ENCODE measurements at regions of chr9 and their contacts with region 1.

Region 1: GRCh38 chr9:94767331-94768072 is 41.0 kb downstream of the AOPEP start:
- DNase-seq: no peak
- H3K4me3 ChIP-seq: no peak overlapping the region
- H3K27ac ChIP-seq: no peak overlapping the region
- H3K4me1 ChIP-seq: no peaks in the 10 kb centered on the region
- H3K27me3 ChIP-seq: no peaks in the 10 kb centered on the region
- CTCF ChIP-seq: no peak
- POLR2A ChIP-seq: no peak

Region 2: GRCh38 chr9:94668418-94668932 is 99.0 kb before region 1 on chr9:
- intact Hi-C with region 1: no loop called
- DNase-seq: no peak
- H3K4me3 ChIP-seq: peak overlapping the region in 4 of 8 donors; percentile 43 to 71 (median 46)
- H3K27ac ChIP-seq: peak overlapping the region in 1 of 8 donors; percentile 54
- H3K4me1 ChIP-seq: peaks cover 0 to 16% (median 10%) of the 10 kb centered on the region in 6 donors
- H3K27me3 ChIP-seq: peaks cover 0 to 20% (median 0%) of the 10 kb centered on the region in 7 donors
- CTCF ChIP-seq: no peak
- POLR2A ChIP-seq: no peak

Region 3: DNA sequence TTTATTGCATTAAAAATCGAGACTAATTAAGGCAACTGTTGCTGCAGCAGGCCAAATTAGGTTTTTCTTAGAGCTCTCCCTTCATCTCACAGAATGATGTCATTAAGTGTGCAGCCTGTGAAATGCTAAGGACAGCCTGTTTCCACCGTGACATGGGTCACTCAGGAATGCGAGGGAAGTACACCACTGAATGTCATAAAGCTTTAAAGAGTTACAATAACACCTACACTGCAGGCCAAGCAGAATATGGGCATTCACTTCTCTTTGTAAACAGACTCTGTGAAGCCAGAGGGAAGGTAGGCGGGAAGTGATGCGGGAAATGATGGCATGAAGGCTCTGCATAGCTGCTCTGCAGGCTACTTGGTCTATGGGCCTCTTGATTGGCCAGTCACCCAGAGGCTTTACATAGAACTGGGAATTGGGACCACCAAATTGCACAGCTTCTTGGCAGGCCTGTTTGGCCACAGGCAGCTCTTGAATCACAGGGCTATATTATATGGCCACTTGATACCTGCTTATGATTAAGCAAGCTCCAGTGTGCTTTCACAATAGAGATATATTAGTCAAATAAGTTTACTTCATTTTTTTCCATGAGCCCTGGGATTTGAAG is 69.4 kb before region 1 on chr9:
- intact Hi-C with region 1: loop called (anchors 10 kb)
- DNase-seq: no peak
- H3K4me3 ChIP-seq: no peak overlapping the region
- H3K27ac ChIP-seq: no peak overlapping the region
- H3K4me1 ChIP-seq: no peaks in the 10 kb centered on the region
- H3K27me3 ChIP-seq: no peaks in the 10 kb centered on the region
- CTCF ChIP-seq: no peak
- POLR2A ChIP-seq: no peak

Region 4: DNA sequence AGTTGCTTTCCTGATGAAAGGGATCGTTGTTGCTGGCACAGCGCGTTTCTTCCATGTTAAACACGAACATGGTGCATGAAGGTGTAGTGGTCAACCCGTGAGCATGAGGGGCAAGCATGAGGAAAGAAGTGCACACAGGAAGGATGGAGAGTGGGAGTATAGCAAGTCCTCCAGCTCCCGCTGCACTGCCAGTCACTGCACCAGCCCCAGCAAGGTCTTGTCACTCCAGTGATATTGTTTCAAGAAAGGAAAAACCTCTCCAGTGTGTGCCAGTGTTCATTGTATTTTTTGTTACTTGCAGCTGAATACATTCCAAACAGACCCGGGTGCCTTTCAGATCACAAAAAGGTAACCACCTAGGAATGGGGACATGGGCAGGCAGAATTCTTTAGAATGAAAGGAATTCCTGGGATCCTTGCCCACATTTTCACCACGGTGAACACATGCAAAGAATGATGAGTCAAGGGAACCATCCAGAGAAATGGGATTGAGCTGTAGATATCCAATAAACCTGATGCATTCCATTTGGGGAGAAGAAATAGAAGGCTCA is 145.3 kb after region 1 on chr9:
- intact Hi-C with region 1: no loop called
- DNase-seq: no peak
- H3K4me3 ChIP-seq: no peak overlapping the region
- H3K27ac ChIP-seq: no peak overlapping the region
- H3K4me1 ChIP-seq: no peaks in the 10 kb centered on the region
- H3K27me3 ChIP-seq: no peaks in the 10 kb centered on the region
- CTCF ChIP-seq: no peak
- POLR2A ChIP-seq: no peak

Region 5: DNA sequence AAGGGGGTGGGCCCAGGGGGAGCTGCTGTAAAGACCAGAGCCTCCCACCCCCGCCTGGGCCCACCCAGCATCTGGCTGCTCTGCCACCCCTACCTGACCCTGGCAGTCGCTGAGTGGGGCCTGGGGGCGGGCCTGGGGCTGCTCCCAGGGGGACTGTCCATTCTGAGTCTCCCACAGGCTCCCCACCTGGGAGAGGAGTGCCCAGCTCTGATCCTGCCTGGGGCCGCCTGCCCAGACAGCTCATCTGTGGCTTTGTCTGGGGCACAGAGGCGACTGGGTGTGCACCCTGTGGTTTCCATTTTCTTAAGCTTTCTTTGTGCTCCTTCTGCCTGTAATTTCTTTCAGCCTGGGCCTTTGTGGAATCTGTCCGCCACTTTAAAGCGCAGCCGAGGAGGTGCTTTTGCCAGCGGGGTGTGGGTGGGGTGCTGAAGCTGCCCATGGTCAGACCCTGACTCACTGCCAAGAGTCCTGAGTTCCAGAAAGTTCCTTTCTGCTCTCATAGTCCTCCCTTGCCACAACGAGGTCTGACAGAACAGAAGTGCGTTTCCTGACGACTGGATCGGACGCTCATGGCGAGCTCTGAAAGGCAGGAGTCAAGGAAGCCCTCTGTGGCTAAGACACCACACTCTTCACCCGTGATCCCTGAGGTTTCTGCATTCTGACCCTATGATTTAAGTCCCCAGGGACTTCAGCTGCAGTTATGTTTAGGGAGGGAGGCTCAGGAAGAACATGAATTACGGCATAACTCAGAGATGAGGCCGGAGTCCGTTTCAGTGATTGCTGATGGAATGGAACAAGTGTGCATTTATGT is 325.0 kb after region 1 on chr9:
- intact Hi-C with region 1: no loop called
- DNase-seq: no peak
- H3K4me3 ChIP-seq: no peak overlapping the region
- H3K27ac ChIP-seq: peak overlapping the region; percentile 27 to 85 (median 70)
- H3K4me1 ChIP-seq: peaks cover 18 to 83% (median 48%) of the 10 kb centered on the region in 6 donors
- H3K27me3 ChIP-seq: no peaks in the 10 kb centered on the region
- CTCF ChIP-seq: no peak
- POLR2A ChIP-seq: no peak

Region 6: GRCh38 chr9:95171001-95171400 is 403.5 kb after region 1 on chr9:
- intact Hi-C with region 1: no loop called
- DNase-seq: no peak
- H3K4me3 ChIP-seq: no peak overlapping the region
- H3K27ac ChIP-seq: no peak overlapping the region
- H3K4me1 ChIP-seq: no peaks in the 10 kb centered on the region
- H3K27me3 ChIP-seq: no peaks in the 10 kb centered on the region
- CTCF ChIP-seq: no peak
- POLR2A ChIP-seq: no peak